ENCODE measurements at regions of chr7 and their contacts with region 1.

Region 1: DNA sequence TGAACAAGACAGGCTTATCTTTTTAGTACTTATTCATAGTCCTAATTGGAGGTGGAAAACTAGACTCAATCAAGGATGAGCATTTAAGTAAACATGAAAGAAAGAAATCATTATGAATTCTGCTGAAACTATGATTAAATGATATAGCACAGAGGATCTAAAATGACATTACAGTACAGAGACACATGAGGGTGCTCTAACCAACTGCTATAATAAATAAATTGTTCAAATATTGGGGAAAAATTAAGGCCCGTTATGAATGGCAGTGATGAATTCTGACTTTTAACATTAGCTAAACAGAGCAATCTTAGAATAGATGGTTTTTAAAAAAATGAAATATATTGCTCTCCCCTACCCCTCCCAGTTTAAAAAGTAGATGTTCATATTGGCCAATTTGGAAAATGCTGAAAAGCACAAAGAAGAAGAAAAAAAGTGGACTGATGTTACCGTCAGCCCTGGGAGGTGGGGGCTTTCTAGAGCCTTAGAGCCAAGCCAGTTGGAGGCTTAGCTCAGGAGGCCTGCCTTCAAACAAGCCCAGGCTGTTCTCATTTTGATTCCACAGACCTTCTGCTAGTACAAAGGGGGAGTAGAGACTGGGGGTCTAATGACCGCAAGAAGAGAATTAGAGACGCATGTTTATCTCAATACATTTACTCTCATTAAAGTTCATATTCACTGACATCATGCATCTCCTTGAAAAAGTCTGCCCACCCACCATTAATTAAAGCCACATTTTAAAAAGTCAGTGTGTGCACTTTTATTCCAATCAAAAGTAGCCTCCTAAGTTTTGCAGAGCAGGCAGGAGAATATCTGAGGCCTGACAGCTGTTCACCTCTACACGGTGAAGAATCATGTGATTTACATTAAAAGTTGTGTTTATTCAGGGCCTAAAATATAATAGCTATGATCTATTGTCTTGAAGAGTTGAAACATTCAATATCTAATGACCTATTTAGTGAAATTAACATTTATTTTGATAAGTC is 10.0 kb downstream of the WNT2 start:
- DNase-seq: no peak
- CTCF ChIP-seq: no peak

Region 2: GRCh38 chr7:117285826-117286225 is 27.1 kb before region 1 on chr7:
- CTCF ChIA-PET with region 1: no interaction called
- POLR2A ChIA-PET with region 1: no interaction called
- DNase-seq: no peak
- CTCF ChIP-seq: no peak

Region 3: DNA sequence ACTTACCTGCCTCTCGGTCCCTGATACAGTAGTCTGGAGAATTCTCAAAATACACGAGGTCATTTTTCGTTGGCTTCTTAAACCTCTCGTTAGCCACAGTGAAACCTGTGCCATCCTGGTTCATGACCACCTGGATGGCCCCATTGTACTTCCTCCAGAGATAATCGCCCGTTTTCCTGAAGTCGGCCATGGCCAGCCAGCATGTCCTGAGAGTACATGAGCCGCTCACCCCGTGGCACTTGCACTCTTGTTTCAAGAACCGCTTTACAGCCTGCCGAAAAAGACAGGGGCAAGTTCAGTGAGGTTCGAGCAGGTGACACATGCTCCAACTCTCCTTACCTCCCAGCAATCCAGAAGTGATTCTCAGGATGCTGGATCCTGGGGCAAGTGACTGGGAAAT is 15.3 kb before region 1 on chr7:
- CTCF ChIA-PET with region 1: interaction called, 14 read pairs
- POLR2A ChIA-PET with region 1: no interaction called
- DNase-seq: no peak
- CTCF ChIP-seq: no peak

Region 4: DNA sequence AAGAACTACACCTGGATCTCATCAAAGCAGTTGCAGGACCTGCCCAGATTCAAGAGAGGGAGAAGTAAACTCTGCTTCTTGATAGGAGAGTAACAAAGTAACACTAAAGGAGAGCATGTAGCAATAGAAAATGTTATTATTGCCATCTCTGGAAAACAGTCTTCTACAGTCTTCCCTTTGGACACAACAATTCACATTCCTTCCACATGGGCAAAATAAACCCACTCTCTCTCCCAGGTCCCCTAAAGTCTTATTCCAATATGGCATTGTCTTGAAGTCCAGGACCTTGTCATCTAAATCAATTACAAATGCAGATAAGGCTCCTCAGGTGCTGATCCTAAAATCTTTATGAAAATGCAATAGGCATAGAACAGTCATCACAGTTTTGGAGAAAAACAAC is 20.3 kb after region 1 on chr7:
- CTCF ChIA-PET with region 1: no interaction called
- POLR2A ChIA-PET with region 1: no interaction called
- DNase-seq: no peak
- CTCF ChIP-seq: no peak

Region 5: GRCh38 chr7:117458977-117459583 is 146.2 kb after region 1 on chr7:
- CTCF ChIA-PET with region 1: no interaction called
- POLR2A ChIA-PET with region 1: no interaction called
- DNase-seq: peak; percentile 22
- CTCF ChIP-seq: peak; percentile 58

Measured in GM10248 (cell line).